Left cardiac atrium (tissue), 4 donors: ENCODE measurements at regions of chr17 and their contacts with region 1.

Region 1: GRCh38 chr17:43170766-43171585 is at the start of gene NBR1:
- DNase-seq: peak; percentile 94
- ATAC-seq: peak; percentile 91 to 93
- total RNA-seq, gene NBR1: 71.9 to 87.2 TPM

Region 2: GRCh38 chr17:43006639-43007551 is 164.1 kb before region 1 on chr17 and contains the start of gene IFI35:
- intact Hi-C with region 1: loop called in 1 of 2 experiments (anchors 5 kb)
- DNase-seq: peak; percentile 88
- ATAC-seq: peak; percentile 92 to 96
- total RNA-seq, gene IFI35: 19.4 to 23.7 TPM

Region 3: DNA sequence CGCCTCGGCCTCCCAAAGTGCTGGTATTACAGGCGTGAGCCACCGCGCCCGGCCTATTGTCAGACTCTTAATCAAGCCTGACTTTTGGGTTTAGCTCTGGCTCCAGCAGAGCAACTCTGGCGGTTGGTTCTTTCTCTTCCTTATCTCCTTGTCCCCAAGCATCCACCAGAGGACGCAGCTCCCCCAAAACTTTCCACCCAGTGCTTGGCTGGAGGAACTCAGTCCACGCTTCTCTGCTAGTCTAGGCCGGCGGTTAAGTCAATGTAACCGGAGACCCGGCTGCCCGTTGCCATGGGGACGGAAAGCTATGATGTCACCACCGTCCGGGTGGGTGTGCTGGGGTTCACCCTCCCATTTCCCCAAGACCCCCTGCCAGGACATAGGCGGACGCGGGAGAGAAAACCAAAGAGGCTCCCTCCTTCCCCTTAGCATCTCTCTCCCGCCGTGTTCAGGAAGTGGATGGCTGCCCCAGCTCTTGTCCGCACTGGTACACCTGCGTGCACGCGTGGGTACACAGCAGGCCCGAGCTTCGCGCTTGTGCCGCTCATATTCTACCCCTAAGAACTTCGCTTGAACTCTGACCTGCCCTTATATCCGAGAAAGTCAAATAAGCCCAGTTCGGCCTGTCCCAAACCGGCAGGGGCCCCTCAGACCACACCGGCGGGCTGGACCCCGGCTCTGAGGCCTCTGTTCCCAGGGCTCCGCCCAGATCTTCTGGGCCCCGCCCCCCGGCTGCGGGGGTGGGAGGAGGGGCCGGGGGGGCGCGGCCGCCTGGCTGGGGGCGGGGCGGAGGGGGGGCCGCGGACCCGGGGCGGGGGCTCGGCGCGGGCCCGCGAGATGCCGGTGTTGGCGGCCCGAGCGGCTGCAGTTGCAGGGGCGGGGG is 146.3 kb before region 1 on chr17 and contains the start of gene RND2:
- intact Hi-C with region 1: loop called in 1 of 2 experiments (anchors 5 kb)
- DNase-seq: peak; percentile 92
- ATAC-seq: peak; percentile 71 to 73
- total RNA-seq, gene RND2: 1.6 to 1.8 TPM

Region 4: GRCh38 chr17:43104665-43105064 is 66.3 kb before region 1 on chr17:
- intact Hi-C with region 1: no loop called
- DNase-seq: no peak
- ATAC-seq: no peak